Right ventricle myocardium superior (tissue), 1 donor: ENCODE measurements at regions of chr15 and their contacts with region 1.

Region 1: DNA sequence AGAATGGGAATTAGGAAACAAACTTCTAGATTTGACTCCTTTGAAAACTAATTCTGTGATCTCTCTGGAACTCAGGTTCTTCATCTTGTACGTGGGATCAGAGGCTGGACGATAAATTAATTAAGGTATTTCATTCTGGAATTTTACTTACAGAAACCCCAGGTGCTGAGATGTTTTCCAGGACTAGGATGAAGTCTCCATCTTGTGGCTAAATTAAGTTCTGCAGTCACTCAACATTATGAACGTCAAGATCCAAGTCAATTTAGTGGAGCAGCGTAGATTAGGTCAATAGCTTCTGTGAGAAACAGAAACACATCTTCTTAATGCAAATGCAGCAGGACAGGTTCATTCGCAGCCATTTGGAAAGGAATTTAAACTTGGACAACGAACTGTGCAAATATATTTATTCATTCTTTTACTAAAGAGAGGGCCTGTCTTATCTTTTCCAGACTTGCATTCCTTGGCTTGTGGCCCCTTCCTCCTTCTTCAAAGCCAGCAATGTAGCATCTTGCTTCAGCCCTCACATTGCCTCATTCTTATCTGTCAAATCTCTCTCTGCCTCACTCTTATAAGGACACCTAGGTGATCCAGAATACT is 26.7 kb upstream of the TMC3 start:
- DNase-seq: no peak
- ATAC-seq: peak; percentile 63

Region 2: GRCh38 chr15:81274931-81275707 is 125.6 kb before region 1 on chr15:
- intact Hi-C with region 1: loop called (anchors 2 kb)
- DNase-seq: peak; percentile 62
- ATAC-seq: peak; percentile 86

Region 3: DNA sequence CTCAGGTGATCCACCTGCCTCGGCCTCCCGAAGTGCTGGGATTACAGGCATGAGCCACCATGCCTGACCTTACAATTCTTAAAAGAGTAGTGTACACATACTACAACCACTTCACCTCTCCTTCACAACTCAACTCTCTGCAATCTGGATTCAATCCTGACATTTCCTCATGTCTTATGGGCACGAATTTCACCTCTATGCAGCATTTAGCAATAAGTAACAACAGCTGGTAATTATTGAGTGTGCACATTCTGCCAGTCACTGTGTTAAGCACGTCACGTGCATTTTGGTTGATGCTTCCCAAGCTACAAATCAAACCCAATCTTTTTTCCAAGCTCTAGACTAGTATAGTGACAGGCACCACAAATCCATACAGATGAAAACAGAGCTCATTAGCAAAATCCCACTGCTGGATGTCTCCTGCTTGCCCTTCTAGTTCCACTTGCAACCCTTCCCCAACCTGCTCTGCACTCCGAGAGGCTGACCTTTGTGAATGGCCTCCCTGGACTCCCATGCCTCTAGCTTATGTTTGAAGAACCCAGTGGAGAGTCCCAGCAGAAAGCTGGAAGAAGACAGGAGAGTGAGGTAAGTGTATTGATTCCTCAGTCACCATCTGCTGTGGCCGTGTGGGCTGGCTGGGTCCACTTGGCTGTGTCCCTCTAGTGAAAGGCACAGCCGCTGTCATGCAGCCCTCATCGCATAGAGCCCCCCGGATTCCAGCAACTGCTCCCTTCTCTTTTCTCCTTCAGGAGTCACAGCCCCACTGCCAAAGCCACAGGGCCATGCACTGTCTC is 468.6 kb after region 1 on chr15:
- intact Hi-C with region 1: no loop called
- DNase-seq: no peak
- ATAC-seq: no peak